Posterior cingulate gyrus (tissue), 11 donors: ENCODE measurements at regions of chr2 and their contacts with region 1.

Region 1: GRCh38 chr2:70301344-70302194 is at the start of gene FAM136A:
- DNase-seq: peak; percentile 66 to 97 (median 82)

Region 2: GRCh38 chr2:69914170-69914960 is 387.2 kb before region 1 on chr2:
- intact Hi-C with region 1: loop called (anchors 5 kb)
- DNase-seq: peak; percentile 98 to 100 (median 100)

Region 3: DNA sequence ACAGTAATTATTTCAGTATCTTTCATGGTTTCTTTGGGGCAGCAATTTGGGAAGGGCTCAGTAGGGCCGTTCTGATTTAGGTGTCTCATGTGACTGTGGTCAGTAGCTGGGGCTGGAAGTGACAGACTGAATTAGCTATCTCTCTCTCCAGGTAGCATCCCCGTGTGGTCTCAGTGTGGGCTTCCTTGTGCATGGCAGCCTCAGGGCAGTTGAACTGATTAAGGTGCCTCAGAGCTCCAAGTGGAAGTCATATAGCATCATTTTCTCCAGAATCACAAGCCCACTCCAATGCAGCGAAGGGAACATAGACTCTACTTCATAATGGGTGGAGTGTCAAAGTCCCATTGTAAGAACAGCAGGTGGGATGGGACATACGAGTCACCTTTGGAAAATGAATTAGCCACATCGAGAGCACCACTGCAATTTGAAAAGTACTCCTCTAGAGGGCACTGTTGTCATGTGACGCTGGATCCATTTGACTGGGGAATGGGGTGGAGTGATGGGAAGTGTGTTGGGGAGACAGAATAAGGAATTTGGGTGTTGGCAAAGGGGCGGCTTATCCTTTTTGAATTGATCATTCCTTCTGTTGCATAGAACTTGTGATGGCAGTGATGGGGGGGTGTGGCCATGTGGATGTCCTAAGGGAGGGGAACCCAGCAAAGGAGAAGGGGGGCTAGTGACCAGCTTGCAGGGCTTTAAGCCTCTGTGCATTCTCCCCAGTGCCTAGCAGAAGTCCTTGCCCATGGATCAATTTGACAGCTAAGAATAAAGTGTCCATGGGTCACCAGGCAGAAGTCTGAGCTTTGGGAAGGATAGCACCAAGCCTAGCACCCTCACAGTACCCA is 39.6 kb after region 1 on chr2:
- intact Hi-C with region 1: loop called (anchors 2 kb)
- DNase-seq: peak in 4 of 10 donors; percentile 10 to 40 (median 33)

Region 4: GRCh38 chr2:70616168-70616694 is 314.7 kb after region 1 on chr2:
- intact Hi-C with region 1: loop called (anchors 5 kb)
- DNase-seq: no peak

Region 5: GRCh38 chr2:70647873-70648481 is 346.4 kb after region 1 on chr2:
- intact Hi-C with region 1: loop called (anchors 1 kb)
- DNase-seq: peak; percentile 37 to 94 (median 76)

Region 6: GRCh38 chr2:70789304-70790135 is 488.0 kb after region 1 on chr2:
- intact Hi-C with region 1: loop called (anchors 10 kb)
- DNase-seq: peak; percentile 48 to 96 (median 74)